ENCODE measurements at regions of chr19 and their contacts with region 1.

Region 1: GRCh38 chr19:7267792-7268704 is 26.2 kb downstream of the INSR start:
- DNase-seq: no peak
- H3K4me3 ChIP-seq: no peak overlapping the region
- CTCF ChIP-seq: no peak

Region 2: DNA sequence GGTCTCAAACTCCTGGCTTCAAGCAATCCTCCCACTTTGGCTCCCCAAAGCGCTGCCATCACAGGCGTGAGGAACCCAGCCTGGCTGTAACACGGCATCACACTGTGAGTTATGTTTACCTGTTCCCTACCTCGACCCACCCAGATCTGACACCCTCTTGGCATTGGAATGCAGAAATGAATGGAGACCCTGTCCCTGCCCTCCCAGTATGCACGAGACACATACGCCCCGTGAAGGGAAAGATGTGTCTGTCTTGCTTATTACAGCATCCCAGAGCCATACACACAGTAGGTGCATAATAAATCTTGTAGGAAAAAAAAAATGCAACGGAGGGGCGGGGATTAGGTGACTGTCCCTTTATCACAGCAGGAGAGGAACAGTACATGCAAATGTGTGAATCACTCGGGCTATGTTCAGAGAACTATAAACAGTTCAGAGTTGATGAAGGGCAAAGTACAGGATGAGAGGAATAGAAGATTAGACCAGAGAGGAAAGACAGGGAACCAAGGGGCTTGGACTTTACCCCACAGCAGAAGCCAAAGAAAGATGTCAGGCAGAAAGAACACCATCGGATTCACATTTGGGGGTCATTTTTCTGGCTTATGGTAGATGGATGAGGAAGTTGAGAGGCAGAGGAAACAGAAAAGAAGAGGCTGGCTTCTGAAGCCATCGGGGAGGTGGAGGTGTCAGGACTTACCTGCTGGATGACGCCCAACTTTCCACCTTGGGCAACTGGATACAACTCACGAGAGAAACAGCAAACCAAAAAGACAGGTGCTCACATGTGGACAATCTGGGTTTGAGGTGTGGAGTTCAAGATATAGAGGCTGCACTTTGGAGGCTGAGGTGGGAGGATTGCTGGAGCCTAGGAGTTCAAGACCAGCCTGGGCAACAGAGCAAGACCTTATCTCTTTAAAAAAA is 68.2 kb before region 1 on chr19:
- in situ Hi-C with region 1: loop called (anchors 10 kb)
- DNase-seq: no peak
- H3K4me3 ChIP-seq: no peak overlapping the region
- CTCF ChIP-seq: no peak

Region 3: GRCh38 chr19:7337380-7338194 is 69.5 kb after region 1 on chr19:
- in situ Hi-C with region 1: loop called (anchors 10 kb)
- DNase-seq: no peak
- H3K4me3 ChIP-seq: no peak overlapping the region
- CTCF ChIP-seq: no peak

Region 4: GRCh38 chr19:7386308-7386707 is 118.3 kb after region 1 on chr19:
- in situ Hi-C with region 1: no loop called
- DNase-seq: no peak
- H3K4me3 ChIP-seq: no peak overlapping the region
- CTCF ChIP-seq: no peak